ENCODE measurements at regions of chr6 and their contacts with region 1.

Region 1: DNA sequence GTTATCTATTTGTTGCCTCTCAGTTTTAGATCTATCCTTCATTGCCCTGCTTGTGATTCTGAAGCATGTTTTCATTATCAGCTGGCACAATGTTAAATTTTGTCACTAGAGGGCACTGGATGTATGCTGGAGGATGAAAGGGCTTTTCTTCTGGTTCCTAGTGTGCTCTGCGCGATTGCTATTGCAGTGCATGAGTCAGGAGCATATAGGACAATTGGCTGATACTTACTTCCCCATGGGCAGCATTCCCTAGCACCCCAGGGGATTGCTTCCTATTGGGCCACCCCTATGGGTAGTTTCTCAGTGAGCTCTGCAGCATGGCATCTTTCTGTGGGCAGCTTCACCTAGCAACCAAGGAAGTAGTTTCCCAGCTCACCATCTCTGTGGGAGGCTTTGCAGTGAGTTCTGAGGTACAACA is 280.3 kb upstream of the SYNCRIP start:
- DNase-seq: peak; percentile 63
- H3K4me3 Mint-ChIP-seq: no peak overlapping the region
- H3K27ac Mint-ChIP-seq: no peak overlapping the region
- H3K4me1 Mint-ChIP-seq: no peaks in the 10 kb centered on the region
- H3K27me3 Mint-ChIP-seq: no peaks in the 10 kb centered on the region

Region 2: GRCh38 chr6:86017236-86017635 is 94.2 kb after region 1 on chr6:
- intact Hi-C with region 1: no loop called
- DNase-seq: no peak
- H3K4me3 Mint-ChIP-seq: no peak overlapping the region
- H3K27ac Mint-ChIP-seq: no peak overlapping the region
- H3K4me1 Mint-ChIP-seq: no peaks in the 10 kb centered on the region
- H3K27me3 Mint-ChIP-seq: no peaks in the 10 kb centered on the region

Region 3: DNA sequence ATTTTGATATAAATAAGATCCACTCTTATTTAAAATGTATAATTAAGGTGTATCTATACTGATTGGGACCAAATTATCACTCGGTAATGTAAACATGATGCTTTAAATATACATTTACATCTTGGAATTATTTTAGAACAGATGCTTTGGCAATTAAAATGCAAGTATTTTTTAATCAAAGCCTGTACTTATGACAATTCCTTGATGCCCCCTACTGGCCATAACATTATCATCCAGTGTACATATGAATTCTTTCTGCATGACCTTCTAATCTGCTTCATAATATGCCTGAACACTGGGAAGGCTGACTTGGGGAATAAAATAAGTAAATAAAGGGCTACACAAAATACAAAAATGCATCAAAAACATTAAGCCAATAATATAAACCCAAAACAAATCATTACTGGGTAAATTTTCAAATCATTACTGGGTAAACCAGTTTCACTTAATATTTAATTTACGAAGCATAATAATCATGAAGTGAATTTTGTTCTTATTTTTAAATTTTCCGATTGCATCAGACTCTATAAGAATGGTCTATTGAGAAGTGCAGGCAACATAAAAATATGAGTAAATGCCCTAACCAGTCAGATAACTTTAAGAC is 1106.8 kb after region 1 on chr6:
- intact Hi-C with region 1: loop called (anchors 5 kb)
- DNase-seq: no peak
- H3K4me3 Mint-ChIP-seq: no peak overlapping the region
- H3K27ac Mint-ChIP-seq: no peak overlapping the region
- H3K4me1 Mint-ChIP-seq: no peaks in the 10 kb centered on the region
- H3K27me3 Mint-ChIP-seq: no peaks in the 10 kb centered on the region